PC-9 (cell line): ENCODE measurements at regions of chr1 and their contacts with region 1.

Region 1: GRCh38 chr1:218585511-218586184 is 240.5 kb downstream of the TGFB2 start:
- DNase-seq: peak; percentile 63 to 91
- H3K4me3 ChIP-seq: no peak overlapping the region
- H3K27ac ChIP-seq: peak overlapping the region; percentile 67
- H3K4me1 ChIP-seq: peaks cover 22% of the 10 kb centered on the region
- H3K27me3 ChIP-seq: no peaks in the 10 kb centered on the region
- CTCF ChIP-seq: no peak

Region 2: GRCh38 chr1:218345673-218346390 is 239.8 kb before region 1 on chr1:
- CTCF ChIA-PET with region 1: no interaction called
- POLR2A ChIA-PET with region 1: interaction called, 10 read pairs
- intact Hi-C with region 1: loop called (anchors 1 kb)
- DNase-seq: peak; percentile 51 to 64
- H3K4me3 ChIP-seq: peak overlapping the region; percentile 98
- H3K27ac ChIP-seq: peak overlapping the region; percentile 85
- H3K4me1 ChIP-seq: peaks cover 40% of the 10 kb centered on the region
- H3K27me3 ChIP-seq: no peaks in the 10 kb centered on the region
- CTCF ChIP-seq: no peak

Region 3: GRCh38 chr1:218377143-218377660 is 208.4 kb before region 1 on chr1:
- CTCF ChIA-PET with region 1: no interaction called
- POLR2A ChIA-PET with region 1: interaction called, 5 read pairs
- intact Hi-C with region 1: loop called (anchors 1 kb)
- DNase-seq: peak; percentile 87 to 96
- H3K4me3 ChIP-seq: peak overlapping the region; percentile 36
- H3K27ac ChIP-seq: peak overlapping the region; percentile 91
- H3K4me1 ChIP-seq: peaks cover 80% of the 10 kb centered on the region
- H3K27me3 ChIP-seq: no peaks in the 10 kb centered on the region
- CTCF ChIP-seq: no peak

Region 4: GRCh38 chr1:218499011-218499691 is 86.5 kb before region 1 on chr1:
- CTCF ChIA-PET with region 1: no interaction called
- POLR2A ChIA-PET with region 1: interaction called, 4 read pairs
- intact Hi-C with region 1: loop called (anchors 1 kb)
- DNase-seq: peak; percentile 37 to 99
- H3K4me3 ChIP-seq: no peak overlapping the region; the same call in 1 of the 2 replicates
- H3K27ac ChIP-seq: peak overlapping the region; percentile 93
- H3K4me1 ChIP-seq: peaks cover 45% of the 10 kb centered on the region
- H3K27me3 ChIP-seq: no peaks in the 10 kb centered on the region
- CTCF ChIP-seq: no peak

Region 5: GRCh38 chr1:218660678-218661053 is 75.0 kb after region 1 on chr1:
- CTCF ChIA-PET with region 1: no interaction called
- POLR2A ChIA-PET with region 1: interaction called, 3 read pairs
- intact Hi-C with region 1: loop called (anchors 2 kb)
- DNase-seq: peak; percentile 23 to 84
- H3K4me3 ChIP-seq: no peak overlapping the region
- H3K27ac ChIP-seq: peak overlapping the region; percentile 81
- H3K4me1 ChIP-seq: peaks cover 44% of the 10 kb centered on the region
- H3K27me3 ChIP-seq: no peaks in the 10 kb centered on the region
- CTCF ChIP-seq: no peak

Region 6: GRCh38 chr1:219385786-219386427 is 800.3 kb after region 1 on chr1:
- CTCF ChIA-PET with region 1: no interaction called
- POLR2A ChIA-PET with region 1: no interaction called
- intact Hi-C with region 1: loop called (anchors 10 kb)
- DNase-seq: peak; percentile 43 to 63
- H3K4me3 ChIP-seq: no peak overlapping the region
- H3K27ac ChIP-seq: no peak overlapping the region
- H3K4me1 ChIP-seq: peaks cover 6% of the 10 kb centered on the region; the same call in 1 of the 2 replicates
- H3K27me3 ChIP-seq: no peaks in the 10 kb centered on the region
- CTCF ChIP-seq: peak; percentile 79

Region 7: GRCh38 chr1:219812491-219813203 is 1227.0 kb after region 1 on chr1:
- CTCF ChIA-PET with region 1: no interaction called
- POLR2A ChIA-PET with region 1: no interaction called
- intact Hi-C with region 1: loop called (anchors 2 kb)
- DNase-seq: peak; percentile 45 to 67
- H3K4me3 ChIP-seq: no peak overlapping the region
- H3K27ac ChIP-seq: no peak overlapping the region
- H3K4me1 ChIP-seq: no peaks in the 10 kb centered on the region
- H3K27me3 ChIP-seq: peaks cover 5% of the 10 kb centered on the region; the same call in 1 of the 2 replicates
- CTCF ChIP-seq: peak; percentile 93